Caco-2 (cell line): ENCODE measurements at regions of chr12 and their contacts with region 1.

Region 1: DNA sequence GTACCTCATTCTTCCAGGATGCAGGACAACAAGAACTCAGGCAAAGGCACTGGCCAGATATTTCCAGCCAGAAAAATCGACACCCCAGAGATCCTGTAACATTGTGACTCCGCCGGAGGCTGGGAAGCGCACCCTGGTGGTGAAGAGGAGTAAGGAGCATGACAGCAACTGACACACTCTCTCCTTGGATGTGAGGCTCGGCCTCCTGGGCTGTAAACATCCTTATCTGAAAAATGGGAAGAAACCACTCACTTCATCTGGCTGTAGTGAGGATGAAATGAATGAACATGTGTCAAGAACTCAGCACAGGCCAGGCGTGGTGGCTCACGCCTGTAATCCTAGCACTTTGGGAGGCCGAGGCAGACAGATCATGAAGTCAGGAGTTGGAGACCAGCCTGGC is 27.5 kb downstream of the TCHP start:
- DNase-seq: peak in 1 of 2 experiments; percentile 58
- H3K4me3 ChIP-seq: no peak overlapping the region
- H3K4me3 Mint-ChIP-seq: no peak overlapping the region
- H3K27ac Mint-ChIP-seq: no peak overlapping the region
- H3K4me1 ChIP-seq: peaks cover 13% of the 10 kb centered on the region
- H3K4me1 Mint-ChIP-seq: peaks cover 11% of the 10 kb centered on the region
- H3K27me3 ChIP-seq: no peaks in the 10 kb centered on the region
- H3K27me3 Mint-ChIP-seq: no peaks in the 10 kb centered on the region
- CTCF ChIP-seq: peak; percentile 47 to 49

Region 2: DNA sequence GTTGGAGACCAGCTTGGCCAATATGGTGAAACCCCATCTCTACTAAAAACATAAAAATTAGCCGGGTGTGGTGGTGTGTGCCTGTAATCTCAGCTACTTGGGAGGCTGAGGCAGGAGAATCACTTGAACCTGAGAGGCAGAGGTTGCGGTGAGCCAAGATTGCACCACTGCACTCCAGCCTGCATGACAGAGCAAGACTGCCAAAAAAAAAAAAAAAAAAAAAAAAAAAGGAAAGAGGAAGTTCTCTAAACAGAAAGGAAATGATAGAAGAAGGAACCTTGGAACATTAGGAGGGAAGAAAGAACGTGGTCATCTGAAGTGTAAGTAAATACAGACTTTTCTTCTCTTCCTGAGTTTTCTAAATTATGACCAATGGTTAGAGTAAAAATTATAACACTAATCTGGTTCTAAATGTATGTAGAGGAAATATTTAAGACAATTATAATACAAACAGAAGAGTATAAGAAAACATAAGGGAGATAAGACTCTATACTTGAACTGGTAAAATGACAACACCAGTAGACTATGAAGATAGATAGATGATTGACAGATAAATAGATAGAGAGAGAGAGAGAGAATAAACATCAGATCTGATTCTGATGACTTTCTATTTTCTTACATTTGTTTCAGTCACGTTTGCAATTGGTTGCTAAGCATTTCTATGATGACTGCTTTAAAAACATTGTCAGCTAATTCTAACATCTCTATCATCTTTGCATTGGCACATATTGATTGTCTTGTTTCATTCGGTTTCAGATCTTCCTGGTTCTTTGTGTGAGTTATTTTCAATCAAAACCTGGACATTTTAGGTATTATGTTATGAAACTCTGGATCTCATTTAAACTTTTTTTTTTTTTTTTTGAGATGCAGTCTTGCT is 1183.4 kb before region 1 on chr12:
- CTCF ChIA-PET with region 1: no interaction called
- POLR2A ChIA-PET with region 1: no interaction called
- intact Hi-C with region 1: no loop called
- DNase-seq: no peak
- H3K4me3 ChIP-seq: no peak overlapping the region
- H3K4me3 Mint-ChIP-seq: no peak overlapping the region
- H3K27ac Mint-ChIP-seq: no peak overlapping the region
- H3K4me1 ChIP-seq: peaks cover 4% of the 10 kb centered on the region; the same call in 1 of the 2 replicates
- H3K4me1 Mint-ChIP-seq: peaks cover 17% of the 10 kb centered on the region
- H3K27me3 ChIP-seq: no peaks in the 10 kb centered on the region
- H3K27me3 Mint-ChIP-seq: no peaks in the 10 kb centered on the region
- CTCF ChIP-seq: no peak

Region 3: GRCh38 chr12:109858764-109859163 is 68.9 kb before region 1 on chr12:
- CTCF ChIA-PET with region 1: no interaction called
- POLR2A ChIA-PET with region 1: no interaction called
- intact Hi-C with region 1: loop called (anchors 1 kb)
- DNase-seq: no peak
- H3K4me3 ChIP-seq: no peak overlapping the region
- H3K4me3 Mint-ChIP-seq: no peak overlapping the region
- H3K27ac Mint-ChIP-seq: no peak overlapping the region
- H3K4me1 ChIP-seq: no peaks in the 10 kb centered on the region
- H3K4me1 Mint-ChIP-seq: no peaks in the 10 kb centered on the region
- H3K27me3 ChIP-seq: no peaks in the 10 kb centered on the region
- H3K27me3 Mint-ChIP-seq: no peaks in the 10 kb centered on the region
- CTCF ChIP-seq: no peak

Region 4: GRCh38 chr12:109962398-109962797 is 34.8 kb after region 1 on chr12:
- CTCF ChIA-PET with region 1: no interaction called
- POLR2A ChIA-PET with region 1: no interaction called
- intact Hi-C with region 1: no loop called
- DNase-seq: no peak
- H3K4me3 ChIP-seq: no peak overlapping the region
- H3K4me3 Mint-ChIP-seq: no peak overlapping the region
- H3K27ac Mint-ChIP-seq: no peak overlapping the region
- H3K4me1 ChIP-seq: no peaks in the 10 kb centered on the region
- H3K4me1 Mint-ChIP-seq: no peaks in the 10 kb centered on the region
- H3K27me3 ChIP-seq: no peaks in the 10 kb centered on the region
- H3K27me3 Mint-ChIP-seq: no peaks in the 10 kb centered on the region
- CTCF ChIP-seq: no peak